ENCODE measurements at regions of chr5 and their contacts with region 1.

Region 1: DNA sequence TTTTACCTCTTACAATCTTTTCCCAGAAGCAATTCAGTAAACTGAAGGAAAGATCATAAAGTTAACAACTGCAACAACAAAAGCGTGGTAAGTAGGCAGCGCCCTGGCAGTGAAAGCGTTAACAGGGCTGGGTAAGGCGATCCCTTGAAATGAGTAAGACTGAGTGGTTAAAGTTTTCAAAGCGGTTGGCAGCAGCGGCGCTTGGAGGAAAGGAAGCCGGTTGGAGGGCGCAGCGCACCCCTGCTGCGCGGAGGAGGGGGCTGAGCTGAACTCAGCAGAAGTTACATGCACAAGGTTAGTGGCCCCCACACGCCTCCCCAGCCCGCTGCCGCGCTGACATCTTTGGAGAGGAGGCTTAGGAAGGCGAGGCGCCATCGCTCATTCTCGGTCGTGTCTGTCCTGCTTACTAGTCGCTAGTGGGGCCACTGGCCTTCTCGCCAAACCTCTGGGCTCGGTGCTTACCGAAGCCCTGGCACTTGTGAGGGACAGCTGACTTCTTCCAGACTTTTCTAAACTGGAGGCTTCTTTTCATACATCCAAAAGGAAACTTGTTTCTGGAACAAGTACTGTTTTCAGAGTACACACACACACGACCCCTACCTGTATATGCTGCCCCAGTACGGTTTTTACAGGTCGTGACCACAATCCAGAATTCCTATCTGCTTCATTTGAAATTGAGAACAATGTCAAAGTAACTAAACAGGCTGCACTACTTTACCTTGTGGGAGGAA is at the start of gene SH3RF2:
- DNase-seq: peak; percentile 94
- H3K4me3 Mint-ChIP-seq: peak within 1 kb of the TSS; percentile 87
- H3K27ac Mint-ChIP-seq: peak within 1 kb of the TSS; percentile 82
- H3K4me1 Mint-ChIP-seq: peaks cover 62% of the 10 kb centered on the region
- H3K27me3 Mint-ChIP-seq: no peaks in the 10 kb centered on the region
- CTCF ChIP-seq: no peak
- total RNA-seq, gene SH3RF2: 14.9 and 29.6 TPM in 2 replicates

Region 2: GRCh38 chr5:145847499-145848497 is 88.8 kb before region 1 on chr5:
- CTCF ChIA-PET with region 1: interaction called, 3 read pairs
- POLR2A ChIA-PET with region 1: interaction called, 6 read pairs
- intact Hi-C with region 1: loop called (anchors 5 kb)
- DNase-seq: peak; percentile 68
- H3K4me3 Mint-ChIP-seq: no peak overlapping the region
- H3K27ac Mint-ChIP-seq: peak overlapping the region; percentile 18
- H3K4me1 Mint-ChIP-seq: peaks cover 21% of the 10 kb centered on the region
- H3K27me3 Mint-ChIP-seq: no peaks in the 10 kb centered on the region
- CTCF ChIP-seq: no peak

Region 3: GRCh38 chr5:145925353-145925752 is 11.2 kb before region 1 on chr5:
- CTCF ChIA-PET with region 1: interaction called, 11 read pairs
- POLR2A ChIA-PET with region 1: interaction called, 268 read pairs
- intact Hi-C with region 1: no loop called
- DNase-seq: peak; percentile 80
- H3K4me3 Mint-ChIP-seq: no peak overlapping the region
- H3K27ac Mint-ChIP-seq: peak overlapping the region; percentile 84
- H3K4me1 Mint-ChIP-seq: peaks cover 37% of the 10 kb centered on the region
- H3K27me3 Mint-ChIP-seq: no peaks in the 10 kb centered on the region
- CTCF ChIP-seq: no peak

Region 4: GRCh38 chr5:145975361-145976066 is 38.9 kb after region 1 on chr5:
- CTCF ChIA-PET with region 1: interaction called, 4 read pairs
- POLR2A ChIA-PET with region 1: interaction called, 25 read pairs
- intact Hi-C with region 1: loop called (anchors 2 kb)
- DNase-seq: peak; percentile 97
- H3K4me3 Mint-ChIP-seq: no peak overlapping the region
- H3K27ac Mint-ChIP-seq: peak overlapping the region; percentile 89
- H3K4me1 Mint-ChIP-seq: peaks cover 59% of the 10 kb centered on the region
- H3K27me3 Mint-ChIP-seq: no peaks in the 10 kb centered on the region
- CTCF ChIP-seq: no peak

Region 5: DNA sequence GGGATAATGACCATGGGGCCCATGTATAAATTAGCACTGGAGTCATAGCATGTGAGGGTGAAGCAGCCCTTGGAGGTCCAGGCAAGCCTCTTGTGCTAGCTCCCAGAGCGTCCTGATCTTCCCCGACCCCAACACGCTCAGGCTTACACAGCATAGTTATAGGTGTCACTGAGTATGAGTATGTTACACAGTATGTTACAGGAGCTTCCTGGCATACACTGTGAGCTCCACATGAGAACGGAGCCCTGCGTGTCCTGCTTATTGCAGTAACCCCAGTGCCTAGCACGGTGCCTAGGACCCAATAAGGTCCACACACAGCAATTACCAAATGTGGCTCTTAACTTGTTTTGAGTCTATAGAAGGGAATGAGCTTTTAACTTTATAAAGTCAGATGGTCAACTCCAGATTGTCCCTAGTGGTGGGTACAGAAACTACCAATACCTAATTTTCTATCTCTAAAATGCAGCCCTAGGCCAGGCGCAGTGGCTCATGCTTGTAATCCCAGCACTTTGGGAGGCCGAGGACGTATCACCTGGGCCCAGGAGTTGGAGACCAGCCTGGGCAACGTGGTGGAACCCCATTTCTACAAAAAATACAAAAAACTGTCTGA is 104.7 kb after region 1 on chr5:
- CTCF ChIA-PET with region 1: interaction called, 29 read pairs
- POLR2A ChIA-PET with region 1: interaction called, 112 read pairs
- intact Hi-C with region 1: loop called (anchors 2 kb)
- DNase-seq: peak; percentile 34
- H3K4me3 Mint-ChIP-seq: no peak overlapping the region
- H3K27ac Mint-ChIP-seq: peak overlapping the region; percentile 62
- H3K4me1 Mint-ChIP-seq: peaks cover 53% of the 10 kb centered on the region
- H3K27me3 Mint-ChIP-seq: no peaks in the 10 kb centered on the region
- CTCF ChIP-seq: no peak